CD14-positive monocyte (primary cell): ENCODE measurements at regions of chr14 and their contacts with region 1.

Region 1: DNA sequence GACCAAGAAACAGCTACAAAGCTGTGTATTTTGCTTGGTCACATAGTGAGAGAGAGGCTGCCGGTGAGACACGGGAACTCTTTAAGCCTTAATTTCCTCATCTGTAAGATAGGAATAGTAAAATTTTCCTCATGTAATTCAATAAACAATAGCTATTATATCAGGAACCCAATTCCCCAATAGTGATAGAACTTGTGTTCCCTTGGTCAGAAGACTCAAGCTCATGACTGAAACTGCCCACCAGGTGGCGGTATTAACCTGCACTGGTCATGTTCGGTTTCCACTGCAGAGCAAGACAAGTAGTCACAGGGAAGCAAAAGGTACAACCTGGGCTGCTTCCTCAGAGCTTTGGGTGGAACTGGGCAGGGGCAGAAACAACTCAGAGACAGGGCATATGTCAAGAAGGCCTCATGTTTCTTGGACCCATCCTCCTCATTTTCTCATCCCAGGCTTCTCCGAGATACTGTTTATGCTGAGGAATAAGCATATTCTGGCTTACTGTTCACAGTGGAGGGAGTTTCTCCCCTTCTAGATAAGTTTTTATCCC is 4.2 kb upstream of the AJUBA start:
- DNase-seq: peak; percentile 73 to 84 (median 81)
- H3K4me3 ChIP-seq: no peak overlapping the region
- H3K4me3 Mint-ChIP-seq: no peak overlapping the region
- H3K27ac ChIP-seq: no peak overlapping the region
- H3K27ac Mint-ChIP-seq: no peak overlapping the region
- H3K4me1 ChIP-seq: peaks cover 16 to 17% of the 10 kb centered on the region in 2 donors
- H3K4me1 Mint-ChIP-seq: no peaks in the 10 kb centered on the region
- H3K27me3 ChIP-seq: peaks cover 6 to 8% of the 10 kb centered on the region in 2 donors
- H3K27me3 Mint-ChIP-seq: peaks cover 0 to 4% (median 4%) of the 10 kb centered on the region in 3 donors
- CTCF ChIP-seq: peak; percentile 86

Region 2: GRCh38 chr14:22570132-22570949 is 416.2 kb before region 1 on chr14:
- intact Hi-C with region 1: loop called in 1 of 2 experiments (anchors 5 kb)
- DNase-seq: peak; percentile 68 to 74 (median 73)
- H3K4me3 ChIP-seq: no peak overlapping the region
- H3K4me3 Mint-ChIP-seq: no peak overlapping the region
- H3K27ac ChIP-seq: no peak overlapping the region
- H3K27ac Mint-ChIP-seq: peak overlapping the region in 6 of 7 donors; percentile 31 to 72 (median 64)
- H3K4me1 ChIP-seq: no peaks in the 10 kb centered on the region
- H3K4me1 Mint-ChIP-seq: peaks cover 7% of the 10 kb centered on the region
- H3K27me3 ChIP-seq: no peaks in the 10 kb centered on the region
- H3K27me3 Mint-ChIP-seq: no peaks in the 10 kb centered on the region
- CTCF ChIP-seq: peak; percentile 70

Region 3: DNA sequence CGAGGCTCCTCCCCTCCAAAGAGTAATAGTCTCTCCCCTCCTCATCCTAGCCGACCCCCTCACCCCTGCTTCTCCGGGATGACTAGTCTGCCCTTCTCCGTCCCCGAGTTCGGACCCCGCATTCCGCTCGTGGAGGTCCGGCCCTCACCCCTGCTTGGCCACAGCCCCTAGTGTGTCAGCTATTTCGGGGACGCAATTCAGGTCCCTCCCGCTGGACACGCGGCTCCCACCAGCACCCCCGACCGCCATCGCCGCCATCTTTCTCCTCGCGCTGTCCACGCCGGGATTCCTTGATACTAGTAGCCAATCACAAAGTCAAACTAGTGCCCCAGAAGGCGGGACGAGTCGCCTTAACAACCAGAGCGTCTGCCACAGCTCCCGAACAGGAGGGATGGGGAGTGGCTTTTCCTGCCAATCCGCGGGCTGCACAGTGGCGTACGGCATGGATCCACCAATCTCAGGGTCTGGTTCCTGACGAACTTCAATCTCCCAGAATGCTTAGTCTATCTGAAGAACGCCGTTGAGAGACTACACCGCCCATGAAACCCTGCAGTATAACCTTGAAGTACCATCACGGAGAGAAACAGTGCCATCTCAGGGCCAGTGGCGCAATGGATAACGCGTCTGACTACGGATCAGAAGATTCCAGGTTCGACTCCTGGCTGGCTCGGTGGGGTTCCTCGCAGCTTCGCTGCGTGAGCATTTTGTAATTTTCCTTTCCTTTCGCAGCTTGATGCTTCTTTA is 57.3 kb before region 1 on chr14 and contains the start of gene PRMT5:
- intact Hi-C with region 1: loop called in 1 of 2 experiments (anchors 10 kb)
- DNase-seq: peak; percentile 99 to 100 (median 99)
- H3K4me3 ChIP-seq: peak within 1 kb of the TSS; percentile 90 to 98 (median 96)
- H3K4me3 Mint-ChIP-seq: no peak within 1 kb of the TSS
- H3K27ac ChIP-seq: peak within 1 kb of the TSS; percentile 65 to 86
- H3K27ac Mint-ChIP-seq: peak within 1 kb of the TSS in 2 of 7 donors; percentile 28 to 85
- H3K4me1 ChIP-seq: peaks cover 19 to 34% of the 10 kb centered on the region in 2 donors
- H3K4me1 Mint-ChIP-seq: peaks cover 8% of the 10 kb centered on the region
- H3K27me3 ChIP-seq: no peaks in the 10 kb centered on the region
- H3K27me3 Mint-ChIP-seq: no peaks in the 10 kb centered on the region
- CTCF ChIP-seq: no peak
- polyA plus RNA-seq, gene PRMT5: 38.7 to 44.4 (median 44.1) TPM

Region 4: DNA sequence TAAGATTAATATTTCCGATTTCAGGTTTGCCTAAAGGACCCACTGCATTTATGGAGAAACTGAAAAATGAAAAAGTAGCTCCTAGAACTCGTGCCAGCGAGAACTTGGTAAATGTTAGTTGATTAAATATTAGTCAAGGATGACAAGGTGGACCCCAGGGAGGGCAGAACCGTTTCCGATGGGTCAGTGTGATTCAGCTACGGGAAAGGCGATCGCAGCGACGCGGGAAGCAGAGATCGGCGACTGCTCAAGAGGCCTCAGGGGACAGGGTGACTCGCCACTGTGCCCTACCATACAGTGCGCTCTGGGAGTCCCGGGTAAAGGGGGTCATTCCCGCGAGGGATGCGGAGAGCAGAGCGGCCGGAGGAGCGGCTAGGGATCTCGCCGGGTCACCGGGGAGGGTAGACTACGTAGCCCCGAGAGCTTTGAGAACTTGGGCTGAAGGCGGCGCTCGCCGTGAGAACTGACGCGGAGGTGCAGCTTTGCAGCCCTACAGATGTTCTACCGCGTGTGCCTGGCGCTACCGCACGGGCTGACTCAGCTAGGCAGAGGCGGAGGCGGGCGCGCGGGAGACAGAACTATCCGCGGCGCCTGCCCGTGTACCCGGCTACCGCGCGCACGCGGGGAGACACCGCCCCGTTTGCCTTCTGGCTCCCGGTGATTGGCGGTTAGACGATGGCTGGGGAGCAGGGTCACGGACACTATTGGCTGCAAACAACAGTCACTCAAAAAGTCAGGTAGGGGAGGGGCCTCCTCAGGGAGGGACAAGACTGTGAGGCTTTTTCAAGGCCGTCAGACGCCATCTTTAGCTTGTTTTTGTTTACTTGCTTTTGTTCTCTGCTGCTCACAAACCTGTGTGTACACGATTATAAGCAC is 20.2 kb after region 1 on chr14:
- intact Hi-C with region 1: loop called in 1 of 2 experiments (anchors 2 kb)
- DNase-seq: peak; percentile 96 to 97 (median 97)
- H3K4me3 ChIP-seq: peak overlapping the region; percentile 85 to 95 (median 89)
- H3K4me3 Mint-ChIP-seq: peak overlapping the region; percentile 99
- H3K27ac ChIP-seq: peak overlapping the region; percentile 85 to 96
- H3K27ac Mint-ChIP-seq: peak overlapping the region; percentile 92 to 98 (median 96)
- H3K4me1 ChIP-seq: peaks cover 30 to 40% of the 10 kb centered on the region in 2 donors
- H3K4me1 Mint-ChIP-seq: peaks cover 21% of the 10 kb centered on the region
- H3K27me3 ChIP-seq: no peaks in the 10 kb centered on the region
- H3K27me3 Mint-ChIP-seq: no peaks in the 10 kb centered on the region
- CTCF ChIP-seq: peak; percentile 29

Region 5: GRCh38 chr14:23057757-23058653 is 71.4 kb after region 1 on chr14:
- intact Hi-C with region 1: loop called (anchors 1 kb)
- DNase-seq: peak; percentile 66 to 80 (median 78)
- H3K4me3 ChIP-seq: peak overlapping the region; percentile 41 to 88 (median 67)
- H3K4me3 Mint-ChIP-seq: peak overlapping the region; percentile 90 to 93
- H3K27ac ChIP-seq: no peak overlapping the region
- H3K27ac Mint-ChIP-seq: peak overlapping the region in 2 of 7 donors; percentile 11 to 68
- H3K4me1 ChIP-seq: peaks cover 20 to 22% of the 10 kb centered on the region in 2 donors
- H3K4me1 Mint-ChIP-seq: peaks cover 20% of the 10 kb centered on the region
- H3K27me3 ChIP-seq: peaks cover 4 to 10% of the 10 kb centered on the region in 2 donors
- H3K27me3 Mint-ChIP-seq: peaks cover 10 to 14% (median 14%) of the 10 kb centered on the region in 3 donors
- CTCF ChIP-seq: peak; percentile 97